ENCODE measurements at regions of chr3 and their contacts with region 1.

Region 1: DNA sequence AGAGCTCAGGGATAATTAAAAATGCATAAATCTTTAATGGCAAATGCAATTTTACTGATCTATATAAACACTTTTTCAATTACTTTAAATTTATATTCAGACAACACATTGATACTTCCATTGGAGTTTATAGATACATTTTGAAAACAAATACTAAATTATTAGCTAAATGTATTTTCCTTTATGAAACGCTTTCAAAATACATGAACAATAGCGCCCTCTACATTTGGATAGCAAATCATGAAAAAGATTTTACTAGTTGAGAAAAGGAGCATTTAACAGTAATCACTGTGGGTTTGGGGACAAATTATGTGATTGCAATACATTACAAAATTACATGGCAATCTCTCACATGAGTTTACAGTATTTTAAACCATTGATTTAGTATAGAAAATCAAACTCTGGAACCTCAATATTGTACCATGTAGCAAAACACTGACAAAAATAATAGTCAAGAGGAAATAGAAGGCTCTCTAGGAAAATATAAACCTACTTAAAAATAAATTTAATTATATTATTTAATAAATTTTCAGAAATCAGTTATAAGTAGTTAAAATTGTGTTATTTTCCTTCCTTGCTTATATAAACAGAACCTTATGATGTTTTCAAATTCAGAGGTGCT is 207.9 kb downstream of the ZIC1 start:
- DNase-seq: no peak
- H3K4me3 ChIP-seq: no peak overlapping the region
- CTCF ChIP-seq: no peak

Region 2: GRCh38 chr3:147409143-147410115 is 207.7 kb before region 1 on chr3 and contains the start of gene ZIC1:
- in situ Hi-C with region 1: loop called (anchors 10 kb)
- DNase-seq: peak; percentile 95
- H3K4me3 ChIP-seq: peak within 1 kb of the TSS; percentile 96
- CTCF ChIP-seq: no peak

Region 3: DNA sequence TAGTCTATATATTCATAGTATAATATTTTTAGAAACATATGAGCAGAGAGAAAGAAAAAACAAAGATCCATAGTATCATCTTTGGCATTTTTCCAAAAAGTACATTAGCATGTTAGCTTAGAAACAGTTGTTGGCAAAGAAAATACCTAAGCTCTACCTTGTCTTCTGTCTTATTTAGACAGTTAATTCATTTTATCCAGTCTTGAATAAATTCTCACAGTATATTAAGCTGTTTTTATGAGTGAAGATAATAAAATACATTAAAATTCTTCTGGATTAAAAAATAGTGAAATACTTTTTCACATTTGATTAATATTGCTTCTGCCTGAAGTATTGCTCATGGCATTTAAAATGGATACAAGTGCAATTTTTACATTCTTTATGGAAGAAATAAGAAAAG is 62.8 kb before region 1 on chr3:
- in situ Hi-C with region 1: no loop called
- DNase-seq: no peak
- H3K4me3 ChIP-seq: no peak overlapping the region
- CTCF ChIP-seq: no peak